Activated T-helper 1 cell treated with anti-CD3 and anti-CD28 coated beads, Interleukin-12 subunit alpha, Interleukin-12 subunit beta, Interleukin-2, Interleukin-4 antibody, amounts not matched to agents 30 ng/mL and 10 ng/mL and 1 ng/mL, durations not matched to agents 14 hours and 24 hours and 36 hours (primary cell): ENCODE measurements at regions of chr15 and their contacts with region 1.

Region 1: GRCh38 chr15:85044251-85044853 is 62.7 kb downstream of the PDE8A start:
- DNase-seq: no peak
- H3K4me3 Mint-ChIP-seq: no peak overlapping the region
- H3K27ac Mint-ChIP-seq: no peak overlapping the region
- H3K4me1 Mint-ChIP-seq: peaks cover 12% of the 10 kb centered on the region
- H3K27me3 Mint-ChIP-seq: no peaks in the 10 kb centered on the region

Region 2: GRCh38 chr15:84955089-84955848 is 89.1 kb before region 1 on chr15:
- intact Hi-C with region 1: loop called (anchors 1 kb)
- DNase-seq: no peak
- H3K4me3 Mint-ChIP-seq: no peak overlapping the region
- H3K27ac Mint-ChIP-seq: no peak overlapping the region
- H3K4me1 Mint-ChIP-seq: peaks cover 10% of the 10 kb centered on the region
- H3K27me3 Mint-ChIP-seq: peaks cover 23% of the 10 kb centered on the region

Region 3: GRCh38 chr15:85080329-85080728 is 36.0 kb after region 1 on chr15:
- intact Hi-C with region 1: no loop called
- DNase-seq: no peak
- H3K4me3 Mint-ChIP-seq: no peak overlapping the region
- H3K27ac Mint-ChIP-seq: no peak overlapping the region
- H3K4me1 Mint-ChIP-seq: no peaks in the 10 kb centered on the region
- H3K27me3 Mint-ChIP-seq: no peaks in the 10 kb centered on the region